Activated naive CD4-positive, alpha-beta T cell treated with anti-CD3 and anti-CD28 coated beads for 36 hours (primary cell): ENCODE measurements at regions of chr3 and their contacts with region 1.

Region 1: GRCh38 chr3:9396700-9397521 is 504 bp upstream of the SETD5 start:
- DNase-seq: peak; percentile 98
- H3K4me3 Mint-ChIP-seq: peak overlapping the region; percentile 91
- H3K27ac Mint-ChIP-seq: peak overlapping the region; percentile 96
- H3K4me1 Mint-ChIP-seq: peaks cover 65% of the 10 kb centered on the region
- H3K27me3 Mint-ChIP-seq: no peaks in the 10 kb centered on the region

Region 2: GRCh38 chr3:8805774-8806173 is 591.1 kb before region 1 on chr3:
- CTCF ChIA-PET with region 1: no interaction called
- intact Hi-C with region 1: no loop called
- DNase-seq: no peak
- H3K4me3 Mint-ChIP-seq: no peak overlapping the region
- H3K27ac Mint-ChIP-seq: no peak overlapping the region
- H3K4me1 Mint-ChIP-seq: no peaks in the 10 kb centered on the region
- H3K27me3 Mint-ChIP-seq: no peaks in the 10 kb centered on the region

Region 3: GRCh38 chr3:8963137-8963869 is 433.6 kb before region 1 on chr3 and contains the start of gene RAD18:
- CTCF ChIA-PET with region 1: no interaction called
- intact Hi-C with region 1: loop called (anchors 2 kb)
- DNase-seq: peak; percentile 95
- H3K4me3 Mint-ChIP-seq: peak within 1 kb of the TSS; percentile 97
- H3K27ac Mint-ChIP-seq: peak within 1 kb of the TSS; percentile 94
- H3K4me1 Mint-ChIP-seq: peaks cover 35% of the 10 kb centered on the region
- H3K27me3 Mint-ChIP-seq: no peaks in the 10 kb centered on the region
- total RNA-seq, gene RAD18: 44.5 to 45.4 TPM

Region 4: DNA sequence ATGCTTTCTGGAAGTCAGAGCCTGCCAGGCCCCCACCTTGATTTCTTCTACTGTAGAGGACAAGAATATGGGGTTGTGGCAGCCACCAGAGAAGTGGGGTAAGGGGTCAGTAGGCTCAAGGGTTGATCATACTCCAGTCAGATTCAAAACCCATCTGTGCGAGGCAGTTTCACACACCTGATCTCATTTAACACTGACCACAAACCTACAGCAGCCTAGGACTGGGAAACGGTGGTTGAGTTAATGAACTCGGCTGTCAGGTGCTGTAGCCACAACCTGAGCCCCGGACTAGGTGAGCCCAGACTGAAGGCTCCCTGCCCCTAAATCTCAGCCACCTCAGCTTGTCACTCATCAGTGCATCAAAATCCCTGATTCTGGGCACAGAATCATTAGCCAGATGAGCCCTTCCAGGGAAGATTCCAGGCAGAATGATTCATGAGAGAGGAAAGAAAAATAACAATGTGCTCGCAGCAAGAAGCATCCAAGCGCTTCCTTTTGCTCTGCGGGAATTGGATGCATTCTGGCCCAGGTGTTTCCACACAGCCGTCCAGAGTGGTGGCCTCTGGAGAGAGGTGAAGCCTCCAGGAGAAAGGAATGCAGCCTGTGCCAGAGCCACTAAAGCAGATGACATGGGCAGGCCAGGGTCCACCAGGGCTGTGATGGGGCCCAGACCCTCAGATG is 249.6 kb before region 1 on chr3:
- CTCF ChIA-PET with region 1: no interaction called
- intact Hi-C with region 1: no loop called
- DNase-seq: no peak
- H3K4me3 Mint-ChIP-seq: no peak overlapping the region
- H3K27ac Mint-ChIP-seq: no peak overlapping the region
- H3K4me1 Mint-ChIP-seq: no peaks in the 10 kb centered on the region
- H3K27me3 Mint-ChIP-seq: no peaks in the 10 kb centered on the region

Region 5: GRCh38 chr3:9362731-9363530 is 34.0 kb before region 1 on chr3 and contains the start of gene THUMPD3:
- CTCF ChIA-PET with region 1: interaction called, 9 read pairs
- intact Hi-C with region 1: loop called (anchors 1 kb)
- DNase-seq: peak; percentile 95
- H3K4me3 Mint-ChIP-seq: peak within 1 kb of the TSS; percentile 98
- H3K27ac Mint-ChIP-seq: peak within 1 kb of the TSS; percentile 99
- H3K4me1 Mint-ChIP-seq: peaks cover 26% of the 10 kb centered on the region
- H3K27me3 Mint-ChIP-seq: no peaks in the 10 kb centered on the region
- total RNA-seq, gene THUMPD3: 46.0 to 48.9 TPM

Region 6: DNA sequence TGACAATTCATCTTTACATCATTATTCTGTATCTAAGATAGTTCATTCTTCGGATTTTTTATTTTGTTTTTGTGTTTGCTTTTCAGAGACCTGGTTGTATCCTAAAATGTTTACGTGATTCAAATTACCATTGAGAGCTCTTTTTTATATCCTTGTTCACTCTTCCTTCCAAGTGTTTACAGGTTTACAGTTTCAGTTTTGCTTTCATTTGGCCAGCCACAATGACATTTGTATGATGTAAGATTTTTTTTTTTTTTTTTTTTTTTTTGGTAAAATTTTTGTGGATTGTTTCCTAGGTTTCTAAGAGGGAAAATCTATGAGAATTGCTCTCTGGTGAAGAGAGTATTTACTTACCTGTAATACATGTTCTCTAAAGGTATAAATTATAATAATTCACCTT is 55.5 kb after region 1 on chr3:
- CTCF ChIA-PET with region 1: interaction called, 3 read pairs
- intact Hi-C with region 1: loop called (anchors 2 kb)
- DNase-seq: no peak
- H3K4me3 Mint-ChIP-seq: no peak overlapping the region
- H3K27ac Mint-ChIP-seq: peak overlapping the region; percentile 83
- H3K4me1 Mint-ChIP-seq: peaks cover 16% of the 10 kb centered on the region
- H3K27me3 Mint-ChIP-seq: no peaks in the 10 kb centered on the region

Region 7: DNA sequence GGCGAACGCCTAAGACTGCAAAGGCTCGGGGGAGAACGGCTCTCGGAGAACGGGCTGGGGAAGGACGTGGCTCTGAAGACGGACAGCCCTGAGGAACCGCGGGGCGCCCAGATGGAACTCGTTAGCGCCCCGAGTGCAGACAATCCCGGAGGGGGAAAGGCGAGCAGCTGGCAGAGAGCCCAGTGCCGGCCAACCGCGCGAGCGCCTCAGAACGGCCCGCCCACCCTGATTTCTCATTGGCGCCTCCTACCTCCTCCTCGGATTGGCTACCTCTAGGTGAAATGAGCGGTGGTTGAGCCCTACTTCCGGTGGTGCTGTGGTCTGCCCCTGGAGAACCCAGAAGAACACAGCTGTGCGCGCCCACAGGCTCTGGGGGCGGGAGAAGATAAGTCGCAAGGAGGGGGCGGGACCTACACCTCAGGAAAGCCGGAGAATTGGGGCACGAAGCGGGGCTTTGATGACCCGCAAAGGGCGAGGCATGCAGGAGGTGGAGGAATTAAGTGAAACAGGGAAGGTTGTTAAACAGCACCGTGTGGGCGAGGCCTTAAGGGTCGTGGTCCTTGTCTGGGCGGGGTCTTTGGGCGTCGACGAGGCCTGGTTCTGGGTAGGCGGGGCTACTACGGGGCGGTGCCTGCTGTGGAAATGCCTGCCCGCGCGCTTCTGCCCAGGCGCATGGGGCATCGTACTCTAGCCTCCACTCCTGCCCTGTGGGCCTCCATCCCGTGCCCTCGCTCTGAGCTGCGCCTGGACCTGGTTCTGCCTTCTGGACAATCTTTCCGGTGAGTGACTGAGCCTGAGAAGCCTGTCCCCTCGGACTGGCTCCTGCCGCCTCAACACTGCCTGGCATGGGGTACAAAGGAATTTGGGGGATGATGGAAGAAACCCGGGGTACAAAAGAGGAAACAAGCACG is 353.0 kb after region 1 on chr3 and contains the start of gene OGG1:
- CTCF ChIA-PET with region 1: no interaction called
- intact Hi-C with region 1: loop called (anchors 1 kb)
- DNase-seq: peak; percentile 98
- H3K4me3 Mint-ChIP-seq: peak within 1 kb of the TSS; percentile 97
- H3K27ac Mint-ChIP-seq: peak within 1 kb of the TSS; percentile 94
- H3K4me1 Mint-ChIP-seq: peaks cover 50% of the 10 kb centered on the region
- H3K27me3 Mint-ChIP-seq: no peaks in the 10 kb centered on the region
- total RNA-seq, gene OGG1: 26.1 to 28.5 TPM

Region 8: GRCh38 chr3:9986237-9986725 is 589.4 kb after region 1 on chr3:
- CTCF ChIA-PET with region 1: no interaction called
- intact Hi-C with region 1: loop called (anchors 1 kb)
- DNase-seq: no peak
- H3K4me3 Mint-ChIP-seq: peak overlapping the region; percentile 97
- H3K27ac Mint-ChIP-seq: peak overlapping the region; percentile 99
- H3K4me1 Mint-ChIP-seq: peaks cover 39% of the 10 kb centered on the region
- H3K27me3 Mint-ChIP-seq: no peaks in the 10 kb centered on the region

Region 9: GRCh38 chr3:10192953-10193691 is 796.2 kb after region 1 on chr3:
- CTCF ChIA-PET with region 1: no interaction called
- intact Hi-C with region 1: loop called (anchors 5 kb)
- DNase-seq: peak; percentile 93
- H3K4me3 Mint-ChIP-seq: peak overlapping the region; percentile 42
- H3K27ac Mint-ChIP-seq: peak overlapping the region; percentile 96
- H3K4me1 Mint-ChIP-seq: peaks cover 85% of the 10 kb centered on the region
- H3K27me3 Mint-ChIP-seq: no peaks in the 10 kb centered on the region

Region 10: GRCh38 chr3:10224784-10225665 is 828.1 kb after region 1 on chr3:
- CTCF ChIA-PET with region 1: no interaction called
- intact Hi-C with region 1: no loop called
- DNase-seq: peak; percentile 88
- H3K4me3 Mint-ChIP-seq: no peak overlapping the region
- H3K27ac Mint-ChIP-seq: peak overlapping the region; percentile 79
- H3K4me1 Mint-ChIP-seq: peaks cover 58% of the 10 kb centered on the region
- H3K27me3 Mint-ChIP-seq: no peaks in the 10 kb centered on the region